Calu3 (cell line): ENCODE measurements at regions of chr22 and their contacts with region 1.

Region 1: DNA sequence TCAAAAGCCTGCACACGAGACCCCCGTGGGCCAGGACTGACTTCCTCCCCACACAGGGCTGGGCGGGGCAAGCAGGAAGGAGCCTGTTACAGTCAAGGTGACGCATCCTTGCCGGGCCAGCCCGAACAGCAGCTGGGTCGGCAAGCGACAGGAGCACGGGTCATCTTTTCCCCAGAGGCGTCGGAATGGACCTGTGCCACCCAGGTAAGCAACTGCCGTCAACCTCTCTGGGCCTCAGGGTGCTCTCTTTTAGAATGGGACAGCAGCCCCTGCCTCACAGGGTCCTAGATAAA is at the start of gene CYTH4:
- DNase-seq: peak; percentile 70
- H3K4me3 Mint-ChIP-seq: peak within 1 kb of the TSS; percentile 29
- H3K27ac Mint-ChIP-seq: peak within 1 kb of the TSS; percentile 32
- H3K4me1 Mint-ChIP-seq: peaks cover 15% of the 10 kb centered on the region
- H3K27me3 Mint-ChIP-seq: peaks cover 47% of the 10 kb centered on the region
- CTCF ChIP-seq: no peak
- total RNA-seq, gene CYTH4: 0.38 and 0.59 TPM in 2 replicates

Region 2: GRCh38 chr22:37077884-37078485 is 204.3 kb before region 1 on chr22:
- CTCF ChIA-PET with region 1: interaction called, 10 read pairs
- intact Hi-C with region 1: no loop called
- DNase-seq: peak; percentile 84
- H3K4me3 Mint-ChIP-seq: no peak overlapping the region
- H3K27ac Mint-ChIP-seq: no peak overlapping the region
- H3K4me1 Mint-ChIP-seq: no peaks in the 10 kb centered on the region
- H3K27me3 Mint-ChIP-seq: peaks cover 57% of the 10 kb centered on the region
- CTCF ChIP-seq: peak; percentile 98